Sigmoid colon (tissue), 7 donors: ENCODE measurements at regions of chr19 and their contacts with region 1.

Region 1: GRCh38 chr19:40716655-40717324 is at the starts of genes COQ8B and ITPKC:
- DNase-seq: peak; percentile 100
- H3K4me3 ChIP-seq: peak within 1 kb of the TSS; percentile 74 to 92 (median 82)
- H3K27ac ChIP-seq: peak within 1 kb of the TSS; percentile 95 to 99 (median 98)
- H3K4me1 ChIP-seq: peaks cover 0 to 69% (median 56%) of the 10 kb centered on the region in 4 donors
- H3K27me3 ChIP-seq: no peaks in the 10 kb centered on the region
- CTCF ChIP-seq: peak in 1 of 4 experiments; percentile 32
- EP300 ChIP-seq: peak in 1 of 4 donors; percentile 74
- POLR2A ChIP-seq: peak; percentile 85 to 91
- total RNA-seq, gene COQ8B: 33.2 to 59.3 (median 39.2) TPM
- total RNA-seq, gene ITPKC: 17.7 to 39.6 (median 23.1) TPM

Region 2: GRCh38 chr19:40650749-40651305 is 66.0 kb before region 1 on chr19:
- intact Hi-C with region 1: no loop called
- DNase-seq: peak; percentile 86
- H3K4me3 ChIP-seq: no peak overlapping the region
- H3K27ac ChIP-seq: peak overlapping the region; percentile 59 to 66 (median 64)
- H3K4me1 ChIP-seq: peaks cover 0 to 33% (median 28%) of the 10 kb centered on the region in 4 donors
- H3K27me3 ChIP-seq: no peaks in the 10 kb centered on the region
- CTCF ChIP-seq: no peak
- EP300 ChIP-seq: no peak
- POLR2A ChIP-seq: no peak

Region 3: DNA sequence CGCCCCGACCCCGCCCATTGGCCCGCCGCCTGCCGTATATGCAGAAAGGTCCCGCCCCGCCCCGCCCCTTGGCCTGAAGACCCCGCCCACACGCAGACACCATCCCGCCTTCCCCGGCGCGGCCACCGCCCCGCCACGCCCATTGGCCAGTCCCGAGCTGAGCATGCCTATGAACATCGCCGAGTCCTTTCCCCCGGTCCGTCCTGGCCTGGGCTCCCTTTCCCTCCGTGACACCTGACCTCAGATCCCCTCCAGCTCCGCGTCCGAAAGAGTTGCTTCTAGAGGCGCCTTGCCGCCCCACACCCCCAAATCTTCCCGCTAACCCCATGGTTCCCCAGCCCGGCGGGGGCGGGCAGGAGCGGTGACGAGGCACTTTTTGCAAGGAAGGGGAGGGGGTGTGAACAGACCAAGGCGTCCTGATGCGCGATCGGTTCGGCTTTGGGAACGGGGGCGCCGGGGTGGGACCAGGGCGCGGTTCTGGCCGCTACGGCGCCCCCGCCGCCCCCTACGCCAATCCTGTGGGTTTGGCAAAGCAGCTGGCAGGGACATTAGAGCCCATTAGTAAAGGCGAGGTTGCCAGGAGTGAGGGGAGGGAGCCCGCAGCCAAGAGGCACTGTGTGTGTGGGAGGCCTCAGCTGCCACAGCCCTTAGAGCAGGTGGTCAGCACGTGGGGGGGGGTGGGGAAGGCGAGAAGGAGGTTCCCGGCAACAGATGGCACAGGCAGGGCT is 25.9 kb before region 1 on chr19:
- intact Hi-C with region 1: loop called (anchors 1 kb)
- DNase-seq: peak; percentile 98
- H3K4me3 ChIP-seq: peak overlapping the region; percentile 46 to 90 (median 78)
- H3K27ac ChIP-seq: peak overlapping the region; percentile 91 to 95 (median 94)
- H3K4me1 ChIP-seq: peaks cover 0 to 43% (median 36%) of the 10 kb centered on the region in 4 donors
- H3K27me3 ChIP-seq: no peaks in the 10 kb centered on the region
- CTCF ChIP-seq: no peak
- EP300 ChIP-seq: peak in 2 of 4 donors; percentile 8 to 63
- POLR2A ChIP-seq: peak; percentile 12 to 19

Region 4: GRCh38 chr19:40750059-40750873 is 33.5 kb after region 1 on chr19 and contains the start of gene ACTMAP:
- intact Hi-C with region 1: loop called (anchors 1 kb)
- DNase-seq: peak; percentile 100
- H3K4me3 ChIP-seq: peak within 1 kb of the TSS; percentile 64 to 73 (median 71)
- H3K27ac ChIP-seq: peak within 1 kb of the TSS; percentile 86 to 96 (median 94)
- H3K4me1 ChIP-seq: peaks cover 0 to 57% (median 45%) of the 10 kb centered on the region in 4 donors
- H3K27me3 ChIP-seq: no peaks in the 10 kb centered on the region
- CTCF ChIP-seq: no peak
- EP300 ChIP-seq: peak in 2 of 4 donors; percentile 8 to 78
- POLR2A ChIP-seq: peak; percentile 66 to 81
- total RNA-seq, gene ACTMAP: 1.8 to 5.3 (median 3.0) TPM

Region 5: GRCh38 chr19:40798223-40798996 is 81.6 kb after region 1 on chr19:
- intact Hi-C with region 1: loop called (anchors 2 kb)
- DNase-seq: peak; percentile 100
- H3K4me3 ChIP-seq: peak overlapping the region; percentile 25 to 100 (median 74)
- H3K27ac ChIP-seq: peak overlapping the region; percentile 89 to 99 (median 96)
- H3K4me1 ChIP-seq: peaks cover 0 to 45% (median 43%) of the 10 kb centered on the region in 4 donors
- H3K27me3 ChIP-seq: no peaks in the 10 kb centered on the region
- CTCF ChIP-seq: peak; percentile 48 to 80 (median 56)
- EP300 ChIP-seq: peak in 1 of 4 donors; percentile 44
- POLR2A ChIP-seq: peak; percentile 40 to 76